ENCODE measurements at regions of chr13 and their contacts with region 1.

Region 1: DNA sequence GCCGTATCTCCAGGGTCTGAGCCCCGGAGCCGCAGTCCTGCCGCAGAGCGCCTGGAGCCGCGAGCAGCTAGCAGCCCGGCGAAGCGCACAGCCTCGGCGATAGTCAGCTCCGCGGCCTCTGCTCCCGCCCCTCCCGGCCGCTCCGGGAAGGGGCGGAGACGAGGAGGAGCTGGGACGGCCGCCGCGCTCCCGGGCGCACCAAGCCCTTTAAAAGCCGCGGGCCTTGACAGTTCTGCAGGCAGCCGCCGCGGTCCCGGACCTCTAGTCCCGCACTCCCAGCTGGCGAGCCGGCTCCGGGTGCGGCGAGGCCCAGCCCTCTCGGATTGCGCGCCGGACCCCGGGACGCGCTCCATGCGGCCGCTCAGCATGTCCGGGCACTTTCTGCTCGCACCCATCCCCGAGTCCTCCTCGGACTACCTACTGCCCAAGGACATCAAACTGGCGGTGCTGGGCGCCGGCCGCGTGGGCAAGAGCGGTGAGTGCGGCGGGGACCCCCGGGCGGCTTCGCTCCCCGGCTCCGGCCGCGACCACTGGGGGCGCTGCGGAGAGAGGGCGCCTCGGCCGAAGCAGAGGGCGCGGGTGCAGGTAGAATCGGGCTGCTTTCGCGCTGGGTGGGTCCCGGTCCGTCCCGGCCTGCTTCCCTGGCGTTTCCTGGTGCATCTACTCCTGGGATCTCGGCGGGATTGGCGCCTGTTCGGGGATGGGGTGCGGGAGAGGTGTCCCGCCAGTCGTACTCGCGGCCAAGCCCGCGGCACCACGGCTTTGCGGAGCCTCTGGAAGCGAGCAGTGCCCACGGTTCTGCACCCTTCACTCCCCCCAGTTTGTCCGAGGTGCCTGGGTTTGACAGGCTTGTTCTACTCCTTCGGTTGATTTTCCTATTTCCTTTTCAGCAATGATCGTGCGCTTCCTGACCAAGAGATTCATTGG is at the start of gene RASL11A:
- DNase-seq: peak; percentile 87
- ATAC-seq: peak; percentile 87
- H3K4me3 ChIP-seq: peak within 1 kb of the TSS; percentile 99
- H3K27ac ChIP-seq: peak within 1 kb of the TSS; percentile 26
- H3K4me1 ChIP-seq: peaks cover 18% of the 10 kb centered on the region
- H3K27me3 ChIP-seq: no peaks in the 10 kb centered on the region
- CTCF ChIP-seq: peak; percentile 82
- total RNA-seq, gene RASL11A: 43.3 and 59.7 TPM in 2 replicates

Region 2: DNA sequence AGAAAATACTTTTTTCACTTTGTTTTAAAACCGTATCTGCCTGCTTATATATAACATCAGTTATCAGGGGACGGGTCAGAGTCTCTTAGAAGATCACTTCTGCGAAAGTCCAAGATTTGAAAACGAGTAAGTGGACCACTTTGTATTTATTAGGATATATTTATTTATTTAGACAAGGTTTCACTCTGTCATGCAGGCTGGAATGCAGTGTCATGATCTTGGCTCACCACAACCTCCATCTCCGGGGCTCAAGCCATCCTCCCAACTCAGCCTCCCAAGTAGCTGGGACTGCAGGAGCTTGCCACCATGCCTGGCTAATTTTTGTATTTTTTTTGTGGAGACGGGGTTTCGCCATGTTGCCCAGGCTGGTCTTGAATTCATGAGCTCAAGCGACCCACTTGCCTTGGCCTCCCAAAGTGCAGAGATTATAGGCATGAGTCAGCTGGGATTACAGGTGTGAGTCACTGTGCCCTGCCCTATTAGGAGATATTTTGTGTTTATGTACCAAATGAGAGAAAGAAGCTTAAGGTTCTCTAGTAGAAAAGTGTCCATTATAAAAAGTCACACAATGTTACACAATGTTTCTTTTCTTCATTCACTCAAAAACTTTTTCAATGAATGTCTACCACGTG is 39.2 kb after region 1 on chr13:
- CTCF ChIA-PET with region 1: interaction called, 10 read pairs
- POLR2A ChIA-PET with region 1: no interaction called
- intact Hi-C with region 1: no loop called
- DNase-seq: peak; percentile 75
- ATAC-seq: peak; percentile 90
- H3K4me3 ChIP-seq: no peak overlapping the region
- H3K27ac ChIP-seq: peak overlapping the region; percentile 48
- H3K4me1 ChIP-seq: peaks cover 22% of the 10 kb centered on the region
- H3K27me3 ChIP-seq: no peaks in the 10 kb centered on the region
- CTCF ChIP-seq: no peak

Region 3: GRCh38 chr13:27391471-27391870 is 120.6 kb after region 1 on chr13:
- CTCF ChIA-PET with region 1: no interaction called
- POLR2A ChIA-PET with region 1: no interaction called
- intact Hi-C with region 1: no loop called
- DNase-seq: no peak
- ATAC-seq: no peak
- H3K4me3 ChIP-seq: no peak overlapping the region
- H3K27ac ChIP-seq: no peak overlapping the region
- H3K4me1 ChIP-seq: no peaks in the 10 kb centered on the region
- H3K27me3 ChIP-seq: no peaks in the 10 kb centered on the region
- CTCF ChIP-seq: no peak

Region 4: GRCh38 chr13:27406178-27406939 is 135.5 kb after region 1 on chr13:
- CTCF ChIA-PET with region 1: no interaction called
- POLR2A ChIA-PET with region 1: no interaction called
- intact Hi-C with region 1: no loop called
- DNase-seq: peak; percentile 62
- ATAC-seq: peak; percentile 48
- H3K4me3 ChIP-seq: no peak overlapping the region
- H3K27ac ChIP-seq: no peak overlapping the region
- H3K4me1 ChIP-seq: peaks cover 16% of the 10 kb centered on the region
- H3K27me3 ChIP-seq: peaks cover 2% of the 10 kb centered on the region; the same call in 1 of the 2 replicates
- CTCF ChIP-seq: peak; percentile 72

Measured in PC-3 (cell line).